CD14-positive monocyte (primary cell): ENCODE measurements at regions of chr12 and their contacts with region 1.

Region 1: DNA sequence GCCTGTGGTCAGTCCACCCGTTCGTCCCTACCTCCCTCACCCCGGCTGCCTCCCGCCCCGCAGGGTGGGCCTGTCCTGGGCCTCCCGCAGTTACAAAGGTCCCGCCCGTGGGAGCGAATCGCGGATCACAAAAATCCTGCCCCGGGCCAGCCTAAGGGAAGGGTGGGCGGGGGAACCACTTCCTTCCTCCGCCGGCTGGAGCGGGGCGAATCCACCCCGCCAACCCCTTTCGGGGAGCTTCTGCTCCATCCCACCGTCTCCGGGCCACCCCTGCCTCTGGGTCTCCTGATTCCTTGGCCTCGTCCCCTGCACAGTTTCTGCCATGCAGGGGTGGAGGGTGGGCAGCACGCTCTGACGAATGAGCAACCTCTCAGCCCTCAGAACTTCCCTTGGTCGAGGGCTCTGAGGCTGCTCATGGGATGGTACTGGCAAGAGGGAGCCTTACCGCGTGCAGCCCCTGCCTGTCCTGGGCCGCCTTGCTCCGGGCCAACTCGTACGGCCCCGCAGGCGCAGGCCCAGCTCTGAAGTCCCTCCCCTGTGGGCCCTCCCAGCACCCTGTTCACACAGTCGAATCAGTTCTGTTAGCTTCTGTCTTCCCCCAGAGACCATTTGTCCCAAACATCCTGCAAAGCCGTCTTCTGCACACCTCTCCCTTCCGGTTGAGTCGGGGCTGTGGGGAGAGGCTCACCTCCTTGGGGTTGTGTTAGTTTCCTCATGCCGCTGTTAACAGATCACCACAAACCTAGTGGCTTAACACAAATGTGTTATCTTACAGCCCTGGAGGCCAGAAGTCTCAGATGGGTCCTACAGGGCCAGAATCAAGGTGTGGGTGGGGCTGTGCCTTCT is 589 bp upstream of the HVCN1 start:
- DNase-seq: peak in 2 of 3 donors; percentile 34 to 39
- H3K4me3 ChIP-seq: peak overlapping the region; percentile 63 to 98 (median 98)
- H3K4me3 Mint-ChIP-seq: peak overlapping the region; percentile 85 to 90
- H3K27ac ChIP-seq: peak overlapping the region; percentile 84 to 90
- H3K27ac Mint-ChIP-seq: peak overlapping the region; percentile 86 to 97 (median 96)
- H3K4me1 ChIP-seq: peaks cover 90 to 96% of the 10 kb centered on the region in 2 donors
- H3K4me1 Mint-ChIP-seq: peaks cover 88% of the 10 kb centered on the region
- H3K27me3 ChIP-seq: no peaks in the 10 kb centered on the region
- H3K27me3 Mint-ChIP-seq: no peaks in the 10 kb centered on the region
- CTCF ChIP-seq: no peak

Region 2: DNA sequence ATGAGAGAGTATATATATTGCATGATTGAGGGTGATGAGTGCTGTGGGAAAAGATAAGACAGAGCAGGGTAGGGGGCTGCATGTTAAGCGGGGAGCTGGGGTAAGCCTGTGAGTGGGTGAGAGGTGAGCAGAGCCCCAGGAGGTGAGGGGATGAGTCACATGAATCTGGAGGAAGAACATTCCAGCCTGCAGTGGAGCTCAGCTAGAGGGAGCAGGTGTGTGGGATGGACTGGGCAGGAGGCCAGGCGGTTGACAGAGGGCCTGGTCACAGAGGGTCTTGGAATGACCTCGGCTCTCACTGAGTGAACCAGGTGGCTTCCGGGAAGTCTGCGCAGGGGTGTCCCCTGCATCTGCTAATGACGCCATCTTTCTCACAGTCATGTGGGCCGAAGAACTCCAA is 737.8 kb before region 1 on chr12:
- intact Hi-C with region 1: no loop called
- DNase-seq: no peak
- H3K4me3 ChIP-seq: no peak overlapping the region
- H3K4me3 Mint-ChIP-seq: no peak overlapping the region
- H3K27ac ChIP-seq: peak overlapping the region; percentile 36 to 77
- H3K27ac Mint-ChIP-seq: peak overlapping the region; percentile 10 to 90 (median 80)
- H3K4me1 ChIP-seq: peaks cover 25 to 27% of the 10 kb centered on the region in 2 donors
- H3K4me1 Mint-ChIP-seq: peaks cover 32% of the 10 kb centered on the region
- H3K27me3 ChIP-seq: no peaks in the 10 kb centered on the region
- H3K27me3 Mint-ChIP-seq: peaks cover 0 to 3% (median 2%) of the 10 kb centered on the region in 3 donors
- CTCF ChIP-seq: no peak

Region 3: DNA sequence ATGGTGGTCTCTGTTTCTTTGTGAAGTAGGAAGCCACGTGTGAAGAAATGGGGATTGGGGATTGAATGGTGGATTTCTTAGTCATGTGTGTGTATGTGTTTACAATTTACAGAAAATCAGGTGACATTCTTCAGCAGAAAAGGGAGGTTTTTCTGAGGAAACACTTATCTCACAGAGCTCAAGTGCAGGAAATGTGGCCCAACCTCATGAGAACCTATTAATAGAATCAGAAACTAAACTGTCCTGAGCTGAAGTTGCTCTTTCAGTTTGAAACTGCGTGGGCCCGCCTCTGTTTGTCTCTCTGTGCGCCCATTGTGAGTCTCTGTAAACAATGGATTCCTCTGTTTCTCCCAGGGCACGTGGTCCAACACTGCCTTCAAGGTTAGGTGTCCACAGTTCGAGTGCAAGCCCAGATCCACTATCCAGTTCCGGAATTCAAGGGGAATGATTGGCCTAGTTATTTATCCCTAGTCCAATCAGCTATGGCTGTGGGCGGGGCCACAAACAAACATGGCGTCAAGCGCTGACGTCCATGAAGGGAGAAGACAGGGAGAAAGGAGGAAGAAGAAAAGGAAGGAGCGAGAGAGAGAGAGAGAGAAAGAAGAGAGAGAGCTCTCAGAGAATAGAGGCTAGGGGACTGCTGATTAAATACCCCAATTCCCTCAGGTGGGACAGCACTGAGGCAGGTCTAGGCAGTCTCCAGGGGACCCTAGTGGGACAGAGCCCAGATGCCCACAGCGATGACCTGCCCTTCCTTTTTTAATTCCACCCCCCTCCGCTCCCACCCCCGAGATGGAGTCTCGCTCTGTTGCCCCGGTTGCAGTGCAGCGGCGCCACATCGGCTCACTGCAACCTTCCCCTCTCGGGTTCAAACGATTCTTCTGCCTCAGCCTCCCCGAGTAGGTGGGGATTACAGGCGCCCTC is 609.8 kb before region 1 on chr12:
- intact Hi-C with region 1: no loop called
- DNase-seq: peak; percentile 77 to 88 (median 83)
- H3K4me3 ChIP-seq: peak overlapping the region; percentile 14 to 72 (median 15)
- H3K4me3 Mint-ChIP-seq: peak overlapping the region; percentile 82 to 94
- H3K27ac ChIP-seq: peak overlapping the region; percentile 31 to 84
- H3K27ac Mint-ChIP-seq: peak overlapping the region; percentile 87 to 98 (median 93)
- H3K4me1 ChIP-seq: peaks cover 13 to 14% of the 10 kb centered on the region in 2 donors
- H3K4me1 Mint-ChIP-seq: peaks cover 11% of the 10 kb centered on the region
- H3K27me3 ChIP-seq: no peaks in the 10 kb centered on the region
- H3K27me3 Mint-ChIP-seq: peaks cover 1 to 11% (median 4%) of the 10 kb centered on the region in 3 donors
- CTCF ChIP-seq: no peak

Region 4: GRCh38 chr12:110627500-110628195 is 61.9 kb before region 1 on chr12:
- intact Hi-C with region 1: loop called in 1 of 2 experiments (anchors 10 kb)
- DNase-seq: peak; percentile 31 to 45 (median 43)
- H3K4me3 ChIP-seq: peak overlapping the region in 1 of 3 experiments; percentile 53
- H3K4me3 Mint-ChIP-seq: peak overlapping the region in 1 of 2 donors; percentile 73
- H3K27ac ChIP-seq: peak overlapping the region in 1 of 2 donors; percentile 73
- H3K27ac Mint-ChIP-seq: peak overlapping the region; percentile 54 to 88 (median 76)
- H3K4me1 ChIP-seq: peaks cover 6 to 14% of the 10 kb centered on the region in 2 donors
- H3K4me1 Mint-ChIP-seq: peaks cover 9% of the 10 kb centered on the region
- H3K27me3 ChIP-seq: no peaks in the 10 kb centered on the region
- H3K27me3 Mint-ChIP-seq: no peaks in the 10 kb centered on the region
- CTCF ChIP-seq: no peak

Region 5: GRCh38 chr12:110647631-110648040 is 41.9 kb before region 1 on chr12:
- intact Hi-C with region 1: loop called in 1 of 2 experiments (anchors 5 kb)
- DNase-seq: peak in 1 of 3 donors; percentile 32
- H3K4me3 ChIP-seq: no peak overlapping the region
- H3K4me3 Mint-ChIP-seq: no peak overlapping the region
- H3K27ac ChIP-seq: peak overlapping the region in 1 of 2 donors; percentile 17
- H3K27ac Mint-ChIP-seq: peak overlapping the region in 5 of 7 donors; percentile 8 to 75 (median 45)
- H3K4me1 ChIP-seq: peaks cover 4 to 15% of the 10 kb centered on the region in 2 donors
- H3K4me1 Mint-ChIP-seq: peaks cover 33% of the 10 kb centered on the region
- H3K27me3 ChIP-seq: no peaks in the 10 kb centered on the region
- H3K27me3 Mint-ChIP-seq: peaks cover 0 to 1% (median 0%) of the 10 kb centered on the region in 3 donors
- CTCF ChIP-seq: no peak

Region 6: DNA sequence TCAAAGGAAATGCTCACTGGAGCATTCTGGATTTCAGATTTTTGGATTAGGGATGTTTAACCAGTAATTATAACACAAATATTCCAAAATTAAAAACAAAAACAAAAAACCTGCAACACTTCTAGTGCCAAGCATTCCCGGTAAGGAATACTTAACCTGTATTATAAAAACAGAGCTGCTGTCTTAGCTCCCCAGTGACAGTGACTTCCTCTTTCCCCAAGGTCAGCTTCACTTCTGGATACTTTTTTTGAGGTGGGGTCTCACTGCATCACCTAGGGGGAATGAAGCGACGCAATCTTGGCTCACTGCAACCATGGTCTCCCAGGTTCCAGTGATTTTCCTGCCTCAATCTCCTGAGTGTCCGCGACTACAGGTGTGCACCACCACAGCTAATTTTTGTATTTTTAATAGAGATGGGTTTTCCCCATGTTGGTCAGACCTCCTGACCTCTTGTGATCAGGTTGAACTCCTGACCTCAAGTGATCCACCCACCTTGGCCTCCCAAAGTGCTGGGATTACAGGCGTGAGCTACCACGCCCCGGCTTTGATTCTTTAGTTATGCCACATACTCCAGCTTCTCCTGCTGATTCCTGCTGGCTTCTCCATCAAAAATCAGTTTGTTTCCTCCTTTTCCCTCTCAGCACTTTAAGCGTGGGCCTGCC is 37.3 kb after region 1 on chr12:
- intact Hi-C with region 1: no loop called
- DNase-seq: no peak
- H3K4me3 ChIP-seq: no peak overlapping the region
- H3K4me3 Mint-ChIP-seq: no peak overlapping the region
- H3K27ac ChIP-seq: peak overlapping the region in 1 of 2 donors; percentile 21
- H3K27ac Mint-ChIP-seq: peak overlapping the region in 3 of 7 donors; percentile 8 to 73 (median 48)
- H3K4me1 ChIP-seq: no peaks in the 10 kb centered on the region
- H3K4me1 Mint-ChIP-seq: peaks cover 4% of the 10 kb centered on the region
- H3K27me3 ChIP-seq: no peaks in the 10 kb centered on the region
- H3K27me3 Mint-ChIP-seq: no peaks in the 10 kb centered on the region
- CTCF ChIP-seq: no peak

Region 7: DNA sequence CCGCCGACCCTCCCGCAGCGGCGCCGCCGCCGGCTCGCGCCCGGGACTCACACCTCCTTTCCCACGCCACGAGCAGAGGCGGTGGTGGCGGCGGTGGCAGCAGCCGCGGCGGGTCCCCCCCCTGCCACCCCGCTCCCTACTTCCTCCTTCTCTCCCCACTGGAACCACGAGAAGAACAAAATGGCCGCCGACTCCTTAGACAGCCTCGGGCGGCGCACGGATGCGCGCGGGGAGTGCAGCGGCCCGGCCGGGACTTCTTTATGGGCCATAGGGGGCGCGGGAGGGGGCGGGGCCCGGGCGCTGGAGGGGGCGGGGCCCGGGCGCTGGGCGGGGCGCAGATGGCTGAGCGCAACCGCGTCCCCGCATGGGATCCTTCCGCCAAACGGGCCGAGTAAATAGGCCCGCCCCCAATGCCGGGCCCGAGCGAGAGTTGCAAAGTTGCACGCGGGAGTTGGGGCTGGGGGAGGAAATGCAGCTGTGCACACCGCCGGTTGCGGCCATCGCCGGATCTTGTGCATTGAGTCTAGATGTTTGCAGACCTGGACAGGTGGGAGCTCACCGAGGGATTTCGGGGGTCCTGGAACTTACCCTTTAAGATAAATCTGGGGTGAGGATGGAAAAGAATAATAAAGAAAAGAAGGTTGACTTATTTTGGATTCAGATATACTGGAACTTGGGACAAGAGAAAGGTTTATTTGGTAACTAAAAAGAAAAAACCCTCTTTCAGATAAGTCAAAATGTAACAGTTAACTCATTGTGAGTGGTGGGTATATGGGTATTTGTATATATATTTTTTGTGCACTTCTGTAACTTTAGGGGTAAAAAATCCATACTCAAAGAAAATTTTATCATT is 53.4 kb after region 1 on chr12 and contains the start of gene PPP1CC:
- intact Hi-C with region 1: loop called in 1 of 2 experiments (anchors 5 kb)
- DNase-seq: peak; percentile 96 to 97 (median 97)
- H3K4me3 ChIP-seq: peak within 1 kb of the TSS; percentile 92 to 95 (median 95)
- H3K4me3 Mint-ChIP-seq: peak within 1 kb of the TSS; percentile 99 to 100
- H3K27ac ChIP-seq: peak within 1 kb of the TSS; percentile 31 to 87
- H3K27ac Mint-ChIP-seq: peak within 1 kb of the TSS; percentile 92 to 96 (median 94)
- H3K4me1 ChIP-seq: peaks cover 27 to 45% of the 10 kb centered on the region in 2 donors
- H3K4me1 Mint-ChIP-seq: peaks cover 52% of the 10 kb centered on the region
- H3K27me3 ChIP-seq: no peaks in the 10 kb centered on the region
- H3K27me3 Mint-ChIP-seq: peaks cover 0 to 5% (median 2%) of the 10 kb centered on the region in 3 donors
- CTCF ChIP-seq: no peak
- polyA plus RNA-seq, gene PPP1CC: 63.2 to 139 (median 128) TPM

Region 8: GRCh38 chr12:110776410-110776809 is 86.9 kb after region 1 on chr12:
- intact Hi-C with region 1: no loop called
- DNase-seq: no peak
- H3K4me3 ChIP-seq: no peak overlapping the region
- H3K4me3 Mint-ChIP-seq: no peak overlapping the region
- H3K27ac ChIP-seq: no peak overlapping the region
- H3K27ac Mint-ChIP-seq: no peak overlapping the region
- H3K4me1 ChIP-seq: peaks cover 0 to under 1% of the 10 kb centered on the region in 2 donors
- H3K4me1 Mint-ChIP-seq: peaks cover 13% of the 10 kb centered on the region
- H3K27me3 ChIP-seq: no peaks in the 10 kb centered on the region
- H3K27me3 Mint-ChIP-seq: peaks cover 0 to 5% (median 0%) of the 10 kb centered on the region in 3 donors
- CTCF ChIP-seq: no peak